Left ventricle myocardium inferior (tissue), 1 donor: ENCODE measurements at regions of chr1 and their contacts with region 1.

Region 1: DNA sequence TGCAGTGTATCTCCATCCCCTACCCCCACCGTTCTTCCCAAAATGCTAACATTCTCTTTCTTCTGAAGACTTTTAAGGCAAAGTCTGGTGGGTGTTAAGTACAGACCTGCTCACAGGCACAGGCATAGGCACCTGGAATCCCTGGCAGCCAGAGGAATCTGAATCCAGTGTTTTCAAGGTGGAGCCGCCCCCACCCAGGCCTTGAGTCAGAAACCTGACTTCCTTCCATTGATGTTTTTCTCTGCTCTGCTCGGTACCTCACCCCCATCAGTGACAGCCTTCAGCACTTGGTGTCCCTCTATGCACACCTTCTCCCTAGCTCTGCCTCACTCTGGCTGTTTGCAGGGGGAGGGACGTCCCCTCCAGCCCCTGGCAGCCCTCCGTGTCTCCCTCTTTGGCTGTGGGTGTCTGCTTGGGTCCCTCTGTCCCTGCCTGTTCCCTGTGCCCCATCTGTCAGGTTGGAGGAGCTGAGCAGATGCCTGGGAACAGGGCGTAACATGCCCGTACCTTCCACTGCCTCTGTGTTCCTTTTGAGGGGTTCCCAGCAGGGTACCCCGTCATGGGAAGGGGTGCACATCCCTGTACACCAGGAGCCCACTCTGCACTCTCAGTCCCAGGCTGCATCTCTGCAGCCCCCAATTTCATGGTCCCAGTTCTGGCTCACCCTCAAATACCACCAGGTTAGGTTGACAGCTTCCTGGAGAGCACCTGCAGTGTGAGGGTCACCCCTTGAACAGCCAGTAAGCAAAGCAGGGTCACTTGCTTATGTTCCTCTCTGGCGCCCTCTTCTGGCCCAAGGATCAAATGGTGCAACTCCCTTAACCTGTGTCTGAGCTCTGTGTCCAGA is 6.7 kb downstream of the NCDN start:
- DNase-seq: peak; percentile 67
- H3K4me3 ChIP-seq: no peak overlapping the region
- H3K27ac ChIP-seq: no peak overlapping the region
- H3K4me1 ChIP-seq: peaks cover 37% of the 10 kb centered on the region
- H3K27me3 ChIP-seq: no peaks in the 10 kb centered on the region
- CTCF ChIP-seq: peak; percentile 80

Region 2: DNA sequence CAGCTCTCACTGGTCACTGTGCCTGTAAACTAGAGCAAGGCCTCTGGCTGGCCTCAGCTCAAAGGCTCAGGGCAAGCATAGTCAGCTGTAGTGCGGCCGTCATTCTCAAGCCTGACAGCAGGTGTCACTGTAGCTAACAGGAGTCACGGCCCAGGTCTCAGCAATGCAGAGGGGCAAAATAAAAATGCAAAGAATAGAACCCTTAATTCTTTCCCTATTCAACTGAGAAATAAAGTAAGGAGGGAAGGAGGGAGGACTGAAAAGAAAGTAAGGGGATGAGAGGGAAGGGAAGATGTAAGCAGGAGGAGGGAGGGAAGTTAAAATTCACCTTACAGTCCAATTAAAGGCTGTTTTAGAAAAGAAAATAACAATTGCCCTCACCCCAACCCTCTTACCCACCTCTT is 113.1 kb before region 1 on chr1:
- intact Hi-C with region 1: loop called (anchors 5 kb)
- DNase-seq: peak; percentile 83
- H3K4me3 ChIP-seq: no peak overlapping the region
- H3K27ac ChIP-seq: peak overlapping the region; percentile 63
- H3K4me1 ChIP-seq: peaks cover 65% of the 10 kb centered on the region
- H3K27me3 ChIP-seq: no peaks in the 10 kb centered on the region
- CTCF ChIP-seq: peak; percentile 88

Region 3: DNA sequence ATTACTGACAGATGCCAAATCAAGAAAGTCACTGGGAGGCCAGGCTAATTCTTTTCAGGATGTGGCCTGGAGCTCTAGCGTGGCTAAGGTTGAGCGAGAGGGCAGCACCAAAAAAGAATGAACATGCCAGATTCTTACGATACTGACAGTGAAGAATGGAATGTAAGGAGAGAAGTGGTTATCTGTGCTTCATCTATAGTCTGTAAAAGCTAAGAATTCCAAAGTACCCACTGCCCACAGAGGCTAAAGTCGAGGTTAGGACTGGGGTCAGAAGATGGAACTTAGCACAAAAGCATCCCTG is 41.6 kb after region 1 on chr1:
- intact Hi-C with region 1: no loop called
- DNase-seq: no peak
- H3K4me3 ChIP-seq: no peak overlapping the region
- H3K27ac ChIP-seq: no peak overlapping the region
- H3K4me1 ChIP-seq: peaks cover 5% of the 10 kb centered on the region
- H3K27me3 ChIP-seq: no peaks in the 10 kb centered on the region
- CTCF ChIP-seq: no peak

Region 4: DNA sequence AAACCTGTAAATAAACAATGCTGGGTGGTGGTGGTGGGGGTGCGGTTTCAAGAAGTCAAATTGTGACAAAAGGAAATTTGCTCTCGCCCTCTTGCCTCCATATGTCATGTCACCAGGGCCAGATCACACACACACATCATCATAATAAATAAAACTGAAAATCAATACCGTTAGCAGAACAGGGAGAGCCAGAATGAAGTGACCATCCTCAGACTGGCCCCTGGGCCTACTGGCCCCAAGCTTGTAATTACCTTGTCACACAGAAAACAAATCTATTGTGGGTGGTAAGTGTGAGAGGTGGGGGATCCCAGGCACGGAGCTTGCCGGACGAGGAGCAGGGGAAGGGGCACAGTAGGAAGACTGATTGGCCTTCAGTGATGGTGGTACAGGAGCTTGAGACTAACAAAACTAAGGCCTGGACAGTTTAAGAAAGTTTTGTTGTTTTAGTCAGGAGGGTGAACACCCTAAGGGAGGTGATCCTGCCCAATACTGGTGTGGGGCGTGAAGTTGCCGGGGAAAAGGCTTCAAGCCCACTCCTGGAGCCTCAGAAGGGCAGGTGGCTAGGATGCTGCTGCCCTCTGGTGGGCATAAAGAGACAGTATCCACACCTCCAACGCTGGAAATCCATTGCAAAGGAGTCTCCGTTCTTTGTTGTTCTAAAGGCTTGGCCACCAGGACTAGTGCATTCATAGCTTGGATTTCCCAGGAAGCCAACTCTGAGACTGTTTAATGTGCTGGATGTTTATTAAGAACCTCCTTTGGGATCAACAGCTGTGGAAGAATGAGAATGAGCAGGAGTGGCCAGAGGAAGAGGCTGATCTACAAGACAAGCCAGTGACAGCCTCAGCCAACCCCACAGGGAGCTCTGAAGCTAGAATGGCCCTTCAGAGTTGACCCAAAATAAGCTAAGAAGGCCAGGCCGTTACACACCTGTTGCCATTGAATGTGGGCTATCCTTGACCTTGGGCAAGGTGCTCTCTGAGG is 162.5 kb after region 1 on chr1:
- intact Hi-C with region 1: loop called (anchors 5 kb)
- DNase-seq: peak; percentile 40
- H3K4me3 ChIP-seq: no peak overlapping the region
- H3K27ac ChIP-seq: no peak overlapping the region
- H3K4me1 ChIP-seq: peaks cover 4% of the 10 kb centered on the region
- H3K27me3 ChIP-seq: no peaks in the 10 kb centered on the region
- CTCF ChIP-seq: peak; percentile 90